OCI-LY7 (cell line): ENCODE measurements at regions of chr5 and their contacts with region 1.

Region 1: GRCh38 chr5:119309326-119309725 is 46.5 kb upstream of the TNFAIP8 start:
- DNase-seq: peak; percentile 79
- H3K4me3 ChIP-seq: peak overlapping the region; percentile 54
- H3K27ac ChIP-seq: peak overlapping the region; percentile 95
- H3K4me1 ChIP-seq: peaks cover 98% of the 10 kb centered on the region
- CTCF ChIP-seq: no peak

Region 2: GRCh38 chr5:119290161-119290569 is 19.2 kb before region 1 on chr5:
- CTCF ChIA-PET with region 1: no interaction called
- POLR2A ChIA-PET with region 1: interaction called, 10 read pairs
- intact Hi-C with region 1: no loop called
- DNase-seq: peak; percentile 90
- H3K4me3 ChIP-seq: peak overlapping the region; percentile 19
- H3K27ac ChIP-seq: peak overlapping the region; percentile 1
- H3K4me1 ChIP-seq: peaks cover 74% of the 10 kb centered on the region
- CTCF ChIP-seq: no peak

Region 3: DNA sequence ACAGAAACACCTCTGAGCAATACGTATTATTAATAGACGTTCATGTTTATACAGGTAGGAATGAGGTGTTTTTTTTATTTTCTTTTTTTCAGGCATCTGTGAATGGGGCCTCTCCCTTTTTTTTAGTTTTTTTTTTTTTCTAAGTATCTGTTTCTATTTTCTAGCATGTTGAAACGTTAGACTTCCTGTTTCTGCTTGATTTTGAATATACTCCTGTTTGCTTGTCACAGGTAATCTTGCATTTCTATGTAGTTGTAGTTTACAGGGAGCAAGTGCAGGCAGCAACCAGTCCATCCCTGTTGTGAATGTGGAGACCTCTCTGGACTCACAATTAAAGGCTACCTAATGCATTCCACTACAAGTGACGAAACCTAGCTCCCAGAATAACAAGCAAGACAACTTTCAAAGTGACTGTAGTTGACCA is 23.7 kb after region 1 on chr5:
- CTCF ChIA-PET with region 1: interaction called, 6 read pairs
- POLR2A ChIA-PET with region 1: interaction called, 286 read pairs
- intact Hi-C with region 1: loop called (anchors 1 kb)
- DNase-seq: peak; percentile 53
- H3K4me3 ChIP-seq: peak overlapping the region; percentile 70
- H3K27ac ChIP-seq: peak overlapping the region; percentile 99
- H3K4me1 ChIP-seq: peaks cover 77% of the 10 kb centered on the region
- CTCF ChIP-seq: no peak